Posterior vena cava (tissue), 2 donors: ENCODE measurements at regions of chrX and their contacts with region 1.

Region 1: GRCh38 chrX:108235986-108236385 is 144.4 kb downstream of the ATG4A start:
- DNase-seq: no peak

Region 2: DNA sequence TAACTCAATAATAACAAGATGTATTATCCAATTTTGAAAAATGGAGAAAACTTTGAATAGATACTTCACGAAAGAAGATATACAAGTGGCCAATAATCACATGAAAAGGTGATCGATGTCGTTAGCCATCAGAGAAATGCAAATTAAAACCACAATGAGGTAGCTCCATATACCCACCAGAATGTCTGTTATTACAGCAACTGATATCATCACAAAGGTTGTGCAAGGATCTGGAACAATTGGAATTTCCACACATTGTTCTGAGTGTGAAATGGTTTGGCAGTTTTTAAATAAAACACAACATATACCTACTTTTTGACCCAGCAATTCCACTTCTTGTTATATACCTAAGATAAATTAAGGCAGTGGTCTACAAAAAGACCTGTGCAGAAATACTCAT is 428.7 kb after region 1 on chrX:
- intact Hi-C with region 1: loop called in 1 of 2 experiments (anchors 5 kb)
- DNase-seq: no peak